Dorsolateral prefrontal cortex (tissue), 120 donors: ENCODE measurements at regions of chr1 and their contacts with region 1.

Region 1: DNA sequence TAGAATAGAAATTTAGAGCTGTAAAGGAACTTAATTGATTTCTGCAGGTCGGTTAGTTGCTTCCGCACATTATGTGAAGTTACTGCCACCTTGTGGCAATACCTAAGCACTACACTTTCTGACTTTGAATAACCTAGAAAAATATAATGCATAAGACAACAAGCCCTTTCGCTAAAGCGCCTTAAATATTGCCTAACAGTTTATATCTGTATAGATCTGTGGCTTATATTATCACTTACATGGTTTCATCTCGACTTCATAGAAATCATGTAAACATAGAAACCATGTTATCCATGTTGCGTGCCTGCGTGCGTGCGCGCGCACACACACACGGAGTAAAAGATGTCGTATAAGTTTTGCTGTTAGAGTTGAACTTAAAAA is 10.9 kb upstream of the IFI16 start:
- DNase-seq: peak in 7 of 10 donors; percentile 38 to 66 (median 64)
- H3K4me3 ChIP-seq: peak overlapping the region; percentile 24 to 72 (median 60)
- H3K27ac ChIP-seq: peak overlapping the region; percentile 72 to 99 (median 95)
- H3K27me3 ChIP-seq: peaks cover 0 to 5% (median 0%) of the 10 kb centered on the region in 45 donors
- CTCF ChIP-seq: peak; percentile 86 to 100 (median 97)

Region 2: DNA sequence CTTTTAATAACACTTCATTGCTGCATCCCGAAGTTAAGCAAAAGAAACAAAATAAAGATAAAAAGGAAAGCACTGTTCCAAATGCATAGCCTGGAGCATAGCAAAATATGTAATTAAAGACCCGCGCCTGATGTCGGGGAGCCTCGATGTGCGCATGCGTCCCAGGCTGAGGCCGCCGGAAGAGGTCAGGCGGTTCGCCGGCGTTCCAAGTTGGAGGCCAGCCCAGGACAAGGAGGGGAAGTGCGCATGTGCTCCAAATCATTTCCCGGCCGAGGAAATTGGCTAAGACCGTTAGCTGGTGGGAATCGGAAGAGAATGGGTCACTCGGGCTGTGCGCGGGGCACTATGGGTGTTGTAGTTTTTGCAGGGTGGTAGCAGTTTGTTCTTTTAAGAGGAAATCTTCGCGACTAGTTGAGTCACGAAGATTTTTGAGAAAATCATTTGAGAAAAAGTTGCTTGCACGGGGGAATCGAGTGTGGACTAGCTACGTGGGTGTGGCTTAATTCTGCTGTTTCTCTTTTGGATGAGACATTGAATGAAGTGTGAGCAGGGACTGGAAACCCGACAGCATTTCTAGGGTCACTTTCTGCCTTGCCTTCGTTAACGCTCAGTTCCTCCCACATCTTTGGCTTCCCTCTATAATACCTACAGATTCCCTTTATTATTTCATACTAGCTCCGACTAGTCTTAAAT is 849.0 kb before region 1 on chr1:
- intact Hi-C with region 1: loop called in 1 of 2 experiments (anchors 2 kb)
- DNase-seq: peak; percentile 83 to 95 (median 92)
- H3K4me3 ChIP-seq: peak overlapping the region; percentile 18 to 73 (median 55)
- H3K27ac ChIP-seq: peak overlapping the region in 58 of 59 donors; percentile 14 to 87 (median 72)
- H3K27me3 ChIP-seq: peaks cover 0 to 8% (median 0%) of the 10 kb centered on the region in 45 donors
- CTCF ChIP-seq: peak in 31 of 56 donors; percentile 7 to 55 (median 29)

Region 3: GRCh38 chr1:158203693-158204457 is 794.9 kb before region 1 on chr1:
- intact Hi-C with region 1: loop called (anchors 2 to 5 kb)
- DNase-seq: no peak
- H3K4me3 ChIP-seq: peak overlapping the region in 1 of 59 donors; percentile 4
- H3K27ac ChIP-seq: no peak overlapping the region
- H3K27me3 ChIP-seq: peaks cover 0 to 12% (median 0%) of the 10 kb centered on the region in 45 donors
- CTCF ChIP-seq: peak; percentile 79 to 97 (median 90)

Region 4: GRCh38 chr1:158506369-158506987 is 492.3 kb before region 1 on chr1:
- intact Hi-C with region 1: loop called in 1 of 2 experiments (anchors 5 kb)
- DNase-seq: peak in 2 of 10 donors; percentile 14 to 44
- H3K4me3 ChIP-seq: no peak overlapping the region
- H3K27ac ChIP-seq: no peak overlapping the region
- H3K27me3 ChIP-seq: peaks cover 0 to 11% (median 0%) of the 10 kb centered on the region in 45 donors
- CTCF ChIP-seq: peak in 32 of 56 donors; percentile 7 to 43 (median 25)

Region 5: GRCh38 chr1:159071970-159072582 is 73.3 kb after region 1 on chr1:
- intact Hi-C with region 1: loop called in 1 of 2 experiments (anchors 5 kb)
- DNase-seq: no peak
- H3K4me3 ChIP-seq: no peak overlapping the region
- H3K27ac ChIP-seq: no peak overlapping the region
- H3K27me3 ChIP-seq: peaks cover 0 to 5% (median 0%) of the 10 kb centered on the region in 45 donors
- CTCF ChIP-seq: peak; percentile 43 to 92 (median 82)